ENCODE measurements at regions of chrX and their contacts with region 1.

Region 1: GRCh38 chrX:17535229-17535628 is 160.2 kb downstream of the NHS start:
- DNase-seq: peak in 1 of 2 donors; percentile 7
- ATAC-seq: peak in 1 of 8 donors; percentile 48
- H3K4me3 ChIP-seq: no peak overlapping the region
- H3K27ac ChIP-seq: no peak overlapping the region
- H3K4me1 ChIP-seq: no peaks in the 10 kb centered on the region
- H3K27me3 ChIP-seq: peaks cover 0 to 17% (median 0%) of the 10 kb centered on the region in 7 donors
- CTCF ChIP-seq: peak in 8 of 9 donors; percentile 21 to 51 (median 44)

Region 2: GRCh38 chrX:17580539-17581152 is 45.4 kb after region 1 on chrX:
- intact Hi-C with region 1: loop called in 2 of 10 experiments (anchors 10 kb)
- DNase-seq: peak in 1 of 2 donors; percentile 21
- ATAC-seq: peak in 7 of 8 donors; percentile 84 to 94 (median 89)
- H3K4me3 ChIP-seq: no peak overlapping the region
- H3K27ac ChIP-seq: peak overlapping the region in 3 of 10 donors; percentile 35 to 48 (median 39)
- H3K4me1 ChIP-seq: peaks cover 0 to 25% (median 9%) of the 10 kb centered on the region in 9 donors
- H3K27me3 ChIP-seq: peaks cover 0 to 15% (median 0%) of the 10 kb centered on the region in 7 donors
- CTCF ChIP-seq: no peak

Region 3: DNA sequence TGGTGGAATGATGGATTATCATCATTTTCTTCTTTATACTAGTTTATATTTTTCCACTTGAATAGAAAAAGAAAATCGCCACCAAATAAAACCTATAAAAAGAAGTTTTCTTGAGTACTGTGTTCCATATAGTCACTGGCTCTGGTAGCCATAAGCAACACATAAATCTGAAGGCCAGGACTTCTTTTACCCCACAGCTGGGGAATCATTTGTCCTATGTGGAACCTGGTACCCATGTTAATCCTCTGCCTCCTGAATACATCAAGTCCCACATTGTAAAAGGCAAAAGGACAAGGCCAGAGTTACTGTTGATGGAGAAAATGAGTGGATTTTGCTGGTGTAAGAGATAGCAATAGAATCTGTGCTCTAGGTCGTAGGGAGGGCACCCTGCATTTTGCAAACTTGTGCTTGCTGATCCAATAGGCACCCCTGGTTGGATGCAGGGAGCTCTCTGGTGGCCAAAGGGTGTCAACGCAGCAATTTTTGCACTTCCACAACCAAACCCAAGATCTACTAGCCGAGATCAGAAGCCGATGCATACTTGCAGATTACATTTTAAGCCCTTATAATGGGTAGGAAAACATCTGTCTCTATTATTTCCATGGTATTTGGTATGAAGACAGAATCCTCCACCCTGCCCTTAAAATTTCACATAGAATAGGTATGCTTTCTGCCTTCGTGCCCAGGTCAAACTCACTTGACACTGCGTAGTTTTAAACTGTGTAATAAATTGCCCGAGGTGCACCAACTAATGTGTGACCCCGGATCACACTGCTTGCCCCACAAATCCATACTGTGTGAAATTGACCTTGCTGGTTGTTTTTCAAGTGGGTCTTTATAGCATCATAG is 55.9 kb after region 1 on chrX:
- intact Hi-C with region 1: loop called in 6 of 10 experiments (anchors 2 to 10 kb)
- DNase-seq: peak; percentile 27 to 51
- ATAC-seq: peak; percentile 67 to 98 (median 88)
- H3K4me3 ChIP-seq: peak overlapping the region in 3 of 10 donors; percentile 10 to 24 (median 22)
- H3K27ac ChIP-seq: peak overlapping the region in 2 of 10 donors; percentile 15 to 25
- H3K4me1 ChIP-seq: peaks cover 0 to 19% (median 0%) of the 10 kb centered on the region in 9 donors
- H3K27me3 ChIP-seq: peaks cover 0 to 8% (median 0%) of the 10 kb centered on the region in 7 donors
- CTCF ChIP-seq: peak; percentile 52 to 76 (median 66)